ENCODE measurements at regions of chr4 and their contacts with region 1.

Region 1: GRCh38 chr4:101347557-101348366 is 436 bp upstream of the PPP3CA start:
- DNase-seq: peak; percentile 98 to 100 (median 99)
- ATAC-seq: peak; percentile 84
- H3K4me3 ChIP-seq: peak overlapping the region; percentile 86
- H3K4me3 Mint-ChIP-seq: peak overlapping the region; percentile 100
- H3K27ac ChIP-seq: peak overlapping the region; percentile 78 to 84
- H3K27ac Mint-ChIP-seq: peak overlapping the region; percentile 94
- H3K4me1 ChIP-seq: peaks cover 15% of the 10 kb centered on the region
- H3K4me1 Mint-ChIP-seq: peaks cover 38% of the 10 kb centered on the region
- H3K27me3 ChIP-seq: peaks cover 0 to 7% of the 10 kb centered on the region in 2 experiments
- H3K27me3 Mint-ChIP-seq: peaks cover 36% of the 10 kb centered on the region
- CTCF ChIP-seq: no peak

Region 2: GRCh38 chr4:101020956-101021355 is 326.8 kb before region 1 on chr4:
- CTCF ChIA-PET with region 1: interaction called, 3 read pairs
- POLR2A ChIA-PET with region 1: interaction called, 15 read pairs
- intact Hi-C with region 1: loop called in 1 of 2 experiments (anchors 5 kb)
- DNase-seq: peak in 4 of 14 experiments; percentile 20 to 77 (median 60)
- ATAC-seq: peak; percentile 73
- H3K4me3 ChIP-seq: peak overlapping the region; percentile 11
- H3K4me3 Mint-ChIP-seq: peak overlapping the region; percentile 61
- H3K27ac ChIP-seq: peak overlapping the region; percentile 46 to 66
- H3K27ac Mint-ChIP-seq: peak overlapping the region; percentile 76
- H3K4me1 ChIP-seq: peaks cover 39% of the 10 kb centered on the region
- H3K4me1 Mint-ChIP-seq: peaks cover 35% of the 10 kb centered on the region
- H3K27me3 ChIP-seq: no peaks in the 10 kb centered on the region
- H3K27me3 Mint-ChIP-seq: no peaks in the 10 kb centered on the region
- CTCF ChIP-seq: no peak

Region 3: DNA sequence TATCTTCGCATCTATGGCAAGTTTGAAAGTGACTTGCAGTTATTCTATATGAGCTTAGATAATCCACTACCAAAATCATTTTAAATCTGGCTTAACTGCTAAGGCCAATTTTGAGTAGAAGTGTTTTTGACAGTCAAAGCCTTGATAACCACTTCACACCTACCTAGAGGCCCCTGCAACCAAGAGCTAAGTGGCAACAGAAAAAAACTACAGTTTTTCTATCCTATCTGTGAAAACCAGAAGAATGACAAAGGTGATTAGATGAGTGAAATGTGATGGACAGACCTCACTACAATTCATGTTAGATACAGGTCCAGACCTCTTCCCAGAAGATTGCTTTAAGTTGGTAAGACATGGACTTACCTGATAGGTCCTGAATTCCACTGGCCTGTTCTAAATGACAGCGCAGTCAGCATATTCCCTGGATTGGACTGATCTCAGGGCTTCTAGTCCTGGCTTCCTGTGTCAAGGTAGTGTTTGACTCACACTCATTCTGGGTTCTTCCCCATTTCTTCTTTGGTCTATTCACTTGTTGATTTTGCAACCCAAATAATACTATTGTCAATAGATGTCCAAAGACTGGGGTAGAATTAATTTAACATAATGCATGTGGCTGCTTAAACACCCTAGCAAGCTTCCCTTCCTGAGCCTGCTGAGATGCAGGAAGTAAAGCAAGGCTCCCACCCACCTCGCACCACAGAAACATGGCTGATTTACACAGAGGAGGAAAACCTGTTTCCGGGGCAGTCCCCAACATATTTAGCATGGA is 65.5 kb before region 1 on chr4:
- CTCF ChIA-PET with region 1: interaction called, 3 read pairs
- POLR2A ChIA-PET with region 1: interaction called, 4 read pairs
- intact Hi-C with region 1: loop called in 1 of 2 experiments (anchors 5 kb)
- DNase-seq: peak in 4 of 14 experiments; percentile 30 to 65 (median 50)
- ATAC-seq: peak; percentile 66
- H3K4me3 ChIP-seq: no peak overlapping the region
- H3K4me3 Mint-ChIP-seq: no peak overlapping the region
- H3K27ac ChIP-seq: no peak overlapping the region
- H3K27ac Mint-ChIP-seq: no peak overlapping the region
- H3K4me1 ChIP-seq: peaks cover 11% of the 10 kb centered on the region
- H3K4me1 Mint-ChIP-seq: peaks cover 74% of the 10 kb centered on the region
- H3K27me3 ChIP-seq: no peaks in the 10 kb centered on the region
- H3K27me3 Mint-ChIP-seq: no peaks in the 10 kb centered on the region
- CTCF ChIP-seq: no peak

Region 4: GRCh38 chr4:101337688-101338087 is 10.1 kb before region 1 on chr4:
- CTCF ChIA-PET with region 1: interaction called, 5 read pairs
- POLR2A ChIA-PET with region 1: interaction called, 16 read pairs
- intact Hi-C with region 1: no loop called
- DNase-seq: peak in 2 of 14 experiments; percentile 20
- ATAC-seq: no peak
- H3K4me3 ChIP-seq: no peak overlapping the region
- H3K4me3 Mint-ChIP-seq: no peak overlapping the region
- H3K27ac ChIP-seq: no peak overlapping the region
- H3K27ac Mint-ChIP-seq: no peak overlapping the region
- H3K4me1 ChIP-seq: peaks cover 10% of the 10 kb centered on the region
- H3K4me1 Mint-ChIP-seq: peaks cover 76% of the 10 kb centered on the region
- H3K27me3 ChIP-seq: no peaks in the 10 kb centered on the region
- H3K27me3 Mint-ChIP-seq: no peaks in the 10 kb centered on the region
- CTCF ChIP-seq: no peak

Region 5: DNA sequence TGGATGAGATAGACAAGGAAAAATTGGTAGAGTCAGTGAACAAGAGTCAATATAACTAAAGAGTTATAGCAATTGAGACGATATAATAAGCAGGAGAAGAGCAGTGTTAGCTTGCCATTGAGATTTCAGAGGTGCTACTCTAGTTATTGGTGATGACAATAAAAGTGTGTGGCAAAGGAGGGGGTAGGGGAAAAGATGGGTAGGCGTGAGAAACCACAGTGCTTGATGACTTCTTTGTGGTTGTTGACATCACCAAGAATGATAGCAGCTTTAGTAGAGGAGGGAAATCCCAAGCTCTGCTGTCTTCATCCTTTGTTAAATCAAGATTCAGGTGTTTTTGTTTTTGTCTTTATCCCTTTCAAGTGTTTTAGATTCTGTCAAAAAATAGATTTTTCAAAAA is 179.4 kb after region 1 on chr4:
- CTCF ChIA-PET with region 1: no interaction called
- POLR2A ChIA-PET with region 1: interaction called, 6 read pairs
- intact Hi-C with region 1: loop called in 1 of 2 experiments (anchors 10 kb)
- DNase-seq: peak in 11 of 14 experiments; percentile 3 to 88 (median 22)
- ATAC-seq: peak; percentile 92
- H3K4me3 ChIP-seq: no peak overlapping the region
- H3K4me3 Mint-ChIP-seq: no peak overlapping the region
- H3K27ac ChIP-seq: no peak overlapping the region
- H3K27ac Mint-ChIP-seq: no peak overlapping the region
- H3K4me1 ChIP-seq: no peaks in the 10 kb centered on the region
- H3K4me1 Mint-ChIP-seq: peaks cover 12% of the 10 kb centered on the region
- H3K27me3 ChIP-seq: peaks cover 0 to 2% of the 10 kb centered on the region in 2 experiments
- H3K27me3 Mint-ChIP-seq: peaks cover 25% of the 10 kb centered on the region
- CTCF ChIP-seq: no peak

Measured in CD4-positive, alpha-beta T cell (primary cell).